Head of caudate nucleus (tissue), 42 donors: ENCODE measurements at regions of chr10 and their contacts with region 1.

Region 1: GRCh38 chr10:79195091-79195923 is 126.5 kb downstream of the ZMIZ1 start:
- DNase-seq: peak; percentile 77 to 94 (median 85)

Region 2: GRCh38 chr10:78047314-78047891 is 1147.9 kb before region 1 on chr10:
- intact Hi-C with region 1: loop called (anchors 5 kb)
- DNase-seq: peak; percentile 81 to 98 (median 94)

Region 3: GRCh38 chr10:78302989-78303854 is 892.1 kb before region 1 on chr10:
- intact Hi-C with region 1: loop called (anchors 5 kb)
- DNase-seq: peak; percentile 76 to 99 (median 95)

Region 4: GRCh38 chr10:78852466-78853240 is 342.7 kb before region 1 on chr10:
- intact Hi-C with region 1: loop called (anchors 10 kb)
- DNase-seq: no peak

Region 5: GRCh38 chr10:78972947-78973900 is 222.1 kb before region 1 on chr10:
- intact Hi-C with region 1: loop called (anchors 5 kb)
- DNase-seq: peak; percentile 71 to 95 (median 85)

Region 6: GRCh38 chr10:79112881-79113431 is 82.4 kb before region 1 on chr10:
- intact Hi-C with region 1: no loop called
- DNase-seq: peak in 2 of 42 donors; percentile 21 to 62